Activated T-helper 2 cell treated with anti-CD3 and anti-CD28 coated beads, Interferon-gamma antibody, Interleukin-2, Interleukin-4, amounts not matched to agents 10 μg/mL and 5 μg/mL and 100 μg/mL, durations not matched to agents 14 hours and 24 hours and 36 hours (primary cell): ENCODE measurements at regions of chr16 and their contacts with region 1.

Region 1: GRCh38 chr16:80273635-80274538 is 266.9 kb upstream of the DYNLRB2 start:
- DNase-seq: no peak
- H3K4me3 Mint-ChIP-seq: no peak overlapping the region
- H3K27ac Mint-ChIP-seq: peak overlapping the region; percentile 63
- H3K4me1 Mint-ChIP-seq: peaks cover 9% of the 10 kb centered on the region
- H3K27me3 Mint-ChIP-seq: no peaks in the 10 kb centered on the region

Region 2: GRCh38 chr16:80197741-80198201 is 76.1 kb before region 1 on chr16:
- intact Hi-C with region 1: loop called (anchors 2 kb)
- DNase-seq: no peak
- H3K4me3 Mint-ChIP-seq: no peak overlapping the region
- H3K27ac Mint-ChIP-seq: peak overlapping the region; percentile 28
- H3K4me1 Mint-ChIP-seq: peaks cover 2% of the 10 kb centered on the region
- H3K27me3 Mint-ChIP-seq: no peaks in the 10 kb centered on the region

Region 3: GRCh38 chr16:80231888-80232287 is 42.0 kb before region 1 on chr16:
- intact Hi-C with region 1: loop called (anchors 5 kb)
- DNase-seq: no peak
- H3K4me3 Mint-ChIP-seq: no peak overlapping the region
- H3K27ac Mint-ChIP-seq: peak overlapping the region; percentile 64
- H3K4me1 Mint-ChIP-seq: peaks cover 7% of the 10 kb centered on the region
- H3K27me3 Mint-ChIP-seq: no peaks in the 10 kb centered on the region

Region 4: DNA sequence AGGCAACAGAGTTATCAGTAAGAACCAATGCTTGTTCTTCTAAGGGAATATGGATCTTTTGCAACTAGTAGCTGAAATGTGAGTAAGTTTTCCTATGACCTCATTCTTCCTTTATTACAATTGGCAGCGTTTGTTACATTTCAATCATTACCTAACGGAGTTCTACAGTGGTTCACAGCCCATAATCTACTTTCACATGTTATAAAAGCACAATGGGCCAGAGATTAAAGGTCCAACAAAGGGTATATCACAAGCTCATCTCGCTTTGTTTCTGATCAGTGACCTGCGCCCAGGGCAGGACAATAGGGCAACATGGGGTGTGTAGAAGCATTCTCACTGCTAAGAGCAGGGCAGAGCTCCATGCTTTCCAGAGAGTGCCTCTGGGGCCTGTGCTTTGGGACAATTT is 13.0 kb before region 1 on chr16:
- intact Hi-C with region 1: loop called (anchors 1 kb)
- DNase-seq: no peak
- H3K4me3 Mint-ChIP-seq: no peak overlapping the region
- H3K27ac Mint-ChIP-seq: no peak overlapping the region
- H3K4me1 Mint-ChIP-seq: peaks cover 11% of the 10 kb centered on the region
- H3K27me3 Mint-ChIP-seq: no peaks in the 10 kb centered on the region